ENCODE measurements at regions of chr2 and their contacts with region 1.

Region 1: DNA sequence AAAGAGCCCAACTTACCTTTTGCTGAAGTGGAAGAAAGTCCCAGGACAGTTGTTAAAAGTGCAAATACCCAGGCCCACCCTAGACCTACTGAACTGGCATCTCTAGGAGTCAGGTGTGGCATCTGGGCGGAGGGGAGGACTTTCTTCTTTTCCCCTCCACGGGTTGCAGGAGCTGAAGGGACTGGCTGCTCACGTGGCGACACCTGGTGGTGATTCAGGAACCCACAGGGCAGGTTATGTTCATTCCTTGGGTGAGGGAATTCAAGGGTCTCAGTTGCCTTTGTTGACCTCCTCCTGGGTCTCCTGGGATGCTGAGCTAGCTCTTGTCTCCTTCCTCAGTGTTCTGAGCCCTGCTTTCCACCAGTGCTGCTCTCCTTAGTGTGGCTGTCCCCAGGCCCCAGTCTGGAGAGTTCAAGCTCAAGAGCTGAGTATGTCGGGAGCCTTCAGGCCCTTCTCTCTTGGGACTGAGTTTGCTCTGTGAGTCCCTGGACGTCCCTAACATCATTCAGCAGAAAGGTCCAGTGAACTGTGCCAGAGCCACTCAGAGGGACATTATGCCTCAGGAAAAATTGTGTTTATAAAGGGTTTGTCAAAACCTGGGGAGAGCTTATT is 56.9 kb downstream of the DYSF start:
- DNase-seq: peak; percentile 59
- ATAC-seq: peak; percentile 86
- H3K4me3 ChIP-seq: no peak overlapping the region
- H3K27ac ChIP-seq: no peak overlapping the region
- H3K4me1 ChIP-seq: no peaks in the 10 kb centered on the region
- H3K27me3 ChIP-seq: no peaks in the 10 kb centered on the region; the same call in 1 of the 2 replicates
- CTCF ChIP-seq: peak; percentile 95

Region 2: GRCh38 chr2:70994756-70995729 is 515.3 kb before region 1 on chr2 and contains the start of gene TEX261:
- CTCF ChIA-PET with region 1: no interaction called
- POLR2A ChIA-PET with region 1: no interaction called
- in situ Hi-C with region 1: no loop called
- intact Hi-C with region 1: no loop called
- DNase-seq: no peak
- ATAC-seq: peak; percentile 99
- H3K4me3 ChIP-seq: peak within 1 kb of the TSS; percentile 88 to 91
- H3K27ac ChIP-seq: peak within 1 kb of the TSS; percentile 81
- H3K4me1 ChIP-seq: peaks cover 7% of the 10 kb centered on the region
- H3K27me3 ChIP-seq: no peaks in the 10 kb centered on the region
- CTCF ChIP-seq: peak; percentile 98
- total RNA-seq, gene TEX261: 64.9 TPM

Region 3: GRCh38 chr2:71299507-71299906 is 210.8 kb before region 1 on chr2:
- CTCF ChIA-PET with region 1: interaction called, 26 read pairs
- POLR2A ChIA-PET with region 1: no interaction called
- in situ Hi-C with region 1: no loop called
- intact Hi-C with region 1: loop called (anchors 1 kb)
- DNase-seq: peak; percentile 22
- ATAC-seq: no peak
- H3K4me3 ChIP-seq: no peak overlapping the region
- H3K27ac ChIP-seq: no peak overlapping the region
- H3K4me1 ChIP-seq: no peaks in the 10 kb centered on the region
- H3K27me3 ChIP-seq: no peaks in the 10 kb centered on the region
- CTCF ChIP-seq: peak; percentile 75; the same call in 1 of the 2 replicates

Region 4: GRCh38 chr2:71306762-71307161 is 203.5 kb before region 1 on chr2:
- CTCF ChIA-PET with region 1: interaction called, 19 read pairs
- POLR2A ChIA-PET with region 1: no interaction called
- in situ Hi-C with region 1: no loop called
- intact Hi-C with region 1: no loop called
- DNase-seq: no peak
- ATAC-seq: no peak
- H3K4me3 ChIP-seq: no peak overlapping the region
- H3K27ac ChIP-seq: no peak overlapping the region
- H3K4me1 ChIP-seq: no peaks in the 10 kb centered on the region
- H3K27me3 ChIP-seq: no peaks in the 10 kb centered on the region
- CTCF ChIP-seq: no peak

Region 5: GRCh38 chr2:71460595-71461303 is 49.6 kb before region 1 on chr2:
- CTCF ChIA-PET with region 1: interaction called, 14 read pairs
- POLR2A ChIA-PET with region 1: no interaction called
- in situ Hi-C with region 1: no loop called
- intact Hi-C with region 1: loop called (anchors 5 kb)
- DNase-seq: no peak
- ATAC-seq: no peak
- H3K4me3 ChIP-seq: no peak overlapping the region
- H3K27ac ChIP-seq: no peak overlapping the region
- H3K4me1 ChIP-seq: no peaks in the 10 kb centered on the region
- H3K27me3 ChIP-seq: peaks cover 7% of the 10 kb centered on the region; the same call in 1 of the 2 replicates
- CTCF ChIP-seq: peak; percentile 74

Region 6: GRCh38 chr2:71843391-71843850 is 333.1 kb after region 1 on chr2:
- CTCF ChIA-PET with region 1: no interaction called
- POLR2A ChIA-PET with region 1: no interaction called
- in situ Hi-C with region 1: no loop called
- intact Hi-C with region 1: no loop called
- DNase-seq: no peak
- ATAC-seq: peak; percentile 69; the same call in 1 of the 2 replicates
- H3K4me3 ChIP-seq: no peak overlapping the region
- H3K27ac ChIP-seq: no peak overlapping the region
- H3K4me1 ChIP-seq: no peaks in the 10 kb centered on the region
- H3K27me3 ChIP-seq: no peaks in the 10 kb centered on the region
- CTCF ChIP-seq: no peak